CD8-positive, alpha-beta T cell (primary cell): ENCODE measurements at regions of chr6 and their contacts with region 1.

Region 1: DNA sequence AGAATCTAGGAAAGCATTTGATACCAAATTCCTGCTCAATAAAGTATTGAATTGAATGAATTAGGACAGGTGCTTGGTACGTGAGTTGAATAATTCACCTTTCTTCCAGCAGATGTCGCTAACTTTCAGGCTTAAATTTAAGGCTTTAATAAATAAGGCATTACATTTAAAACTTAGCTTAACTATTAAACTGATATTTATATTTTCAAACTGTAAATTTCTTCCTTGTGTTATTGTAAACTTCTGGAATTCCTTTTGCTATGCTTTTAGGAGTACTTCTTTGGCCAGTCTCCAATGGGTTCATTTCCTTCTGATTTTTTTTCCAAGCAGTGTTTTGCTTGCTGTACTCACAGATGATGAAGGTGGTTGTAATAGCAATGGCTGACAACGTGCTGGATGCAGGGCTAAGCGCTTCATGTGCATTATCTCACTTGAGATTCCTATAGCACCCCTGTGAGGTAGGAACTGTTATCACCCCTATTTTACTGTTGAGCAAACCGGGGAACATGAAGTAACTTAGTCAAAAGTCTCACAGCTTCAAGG is 71.3 kb upstream of the SLC2A12 start:
- DNase-seq: peak in 5 of 9 experiments; percentile 2 to 69 (median 47)
- ATAC-seq: peak; percentile 99
- H3K4me3 ChIP-seq: no peak overlapping the region
- H3K4me3 Mint-ChIP-seq: no peak overlapping the region
- H3K27ac ChIP-seq: no peak overlapping the region
- H3K27ac Mint-ChIP-seq: no peak overlapping the region
- H3K4me1 ChIP-seq: no peaks in the 10 kb centered on the region
- H3K4me1 Mint-ChIP-seq: peaks cover 4% of the 10 kb centered on the region
- H3K27me3 ChIP-seq: no peaks in the 10 kb centered on the region
- H3K27me3 Mint-ChIP-seq: no peaks in the 10 kb centered on the region
- CTCF ChIP-seq: peak; percentile 92

Region 2: GRCh38 chr6:133977983-133978895 is 145.5 kb before region 1 on chr6:
- CTCF ChIA-PET with region 1: no interaction called
- POLR2A ChIA-PET with region 1: no interaction called
- intact Hi-C with region 1: no loop called
- DNase-seq: no peak
- ATAC-seq: no peak
- H3K4me3 ChIP-seq: no peak overlapping the region
- H3K4me3 Mint-ChIP-seq: no peak overlapping the region
- H3K27ac ChIP-seq: no peak overlapping the region
- H3K27ac Mint-ChIP-seq: no peak overlapping the region
- H3K4me1 ChIP-seq: peaks cover 5% of the 10 kb centered on the region
- H3K4me1 Mint-ChIP-seq: peaks cover 47% of the 10 kb centered on the region
- H3K27me3 ChIP-seq: no peaks in the 10 kb centered on the region
- H3K27me3 Mint-ChIP-seq: no peaks in the 10 kb centered on the region
- CTCF ChIP-seq: no peak

Region 3: DNA sequence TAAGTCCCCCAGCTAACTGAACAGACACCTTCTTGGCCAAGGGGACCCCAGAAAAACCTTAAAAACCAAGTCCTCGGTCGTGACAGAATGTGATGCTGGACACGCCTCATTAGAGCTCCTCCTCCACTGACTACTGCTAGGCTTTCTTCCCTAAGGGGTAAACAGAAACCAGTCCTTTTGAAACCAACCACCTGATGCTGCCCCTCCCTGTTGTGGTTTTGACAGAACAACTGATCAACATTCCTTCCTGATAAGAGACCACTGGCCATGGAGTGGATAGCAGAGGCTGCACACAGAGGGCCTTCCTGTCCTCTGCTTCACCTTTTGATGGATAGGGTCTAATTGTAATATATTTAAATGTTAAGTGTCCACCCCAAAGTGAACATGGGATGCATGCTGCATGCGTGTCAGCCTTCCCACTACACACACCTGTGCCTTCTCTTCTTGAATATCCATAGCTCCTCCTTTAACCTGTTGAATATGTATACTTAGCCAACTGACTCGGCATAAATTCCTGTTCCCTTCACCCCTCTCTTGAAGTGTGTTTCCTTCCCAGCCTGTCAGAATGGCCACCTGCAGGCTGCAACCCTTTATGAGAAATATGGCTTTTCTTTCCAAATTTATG is 43.5 kb before region 1 on chr6:
- CTCF ChIA-PET with region 1: no interaction called
- POLR2A ChIA-PET with region 1: no interaction called
- intact Hi-C with region 1: no loop called
- DNase-seq: no peak
- ATAC-seq: no peak
- H3K4me3 ChIP-seq: no peak overlapping the region
- H3K4me3 Mint-ChIP-seq: no peak overlapping the region
- H3K27ac ChIP-seq: no peak overlapping the region
- H3K27ac Mint-ChIP-seq: no peak overlapping the region
- H3K4me1 ChIP-seq: no peaks in the 10 kb centered on the region
- H3K4me1 Mint-ChIP-seq: peaks cover 13% of the 10 kb centered on the region
- H3K27me3 ChIP-seq: no peaks in the 10 kb centered on the region
- H3K27me3 Mint-ChIP-seq: peaks cover 2% of the 10 kb centered on the region
- CTCF ChIP-seq: no peak

Region 4: DNA sequence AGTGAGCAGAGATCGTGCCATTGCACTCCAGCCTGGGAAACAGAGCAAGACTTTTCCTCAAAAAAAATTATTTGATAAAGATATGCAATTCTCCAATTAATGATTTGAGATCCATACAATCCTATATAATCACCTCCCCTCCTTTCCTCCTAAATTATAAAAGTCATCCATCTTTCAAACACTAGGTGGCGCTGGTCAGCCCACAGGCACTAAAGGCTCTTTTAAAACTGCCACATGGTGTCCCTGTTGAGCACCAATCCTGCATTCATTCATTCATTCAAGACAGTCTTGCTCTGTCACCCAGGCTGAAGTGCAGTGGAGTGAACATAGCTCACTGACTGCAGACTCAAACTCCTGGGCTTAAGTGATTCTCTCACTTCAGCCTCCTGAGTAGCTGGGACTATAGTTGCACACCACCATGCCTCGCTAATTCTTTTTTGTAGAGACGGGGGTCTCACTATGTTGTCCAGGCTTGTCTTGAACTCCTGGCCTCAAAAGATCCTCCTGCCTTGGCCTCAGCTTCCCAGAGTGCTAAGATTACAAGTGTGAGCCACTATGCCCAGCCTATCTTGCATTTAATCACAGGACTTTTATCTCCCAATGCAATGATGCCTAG is 12.6 kb before region 1 on chr6:
- CTCF ChIA-PET with region 1: interaction called, 41 read pairs
- POLR2A ChIA-PET with region 1: no interaction called
- intact Hi-C with region 1: no loop called
- DNase-seq: peak in 6 of 9 experiments; percentile 7 to 77 (median 44)
- ATAC-seq: peak; percentile 96
- H3K4me3 ChIP-seq: no peak overlapping the region
- H3K4me3 Mint-ChIP-seq: no peak overlapping the region
- H3K27ac ChIP-seq: no peak overlapping the region
- H3K27ac Mint-ChIP-seq: no peak overlapping the region
- H3K4me1 ChIP-seq: no peaks in the 10 kb centered on the region
- H3K4me1 Mint-ChIP-seq: peaks cover 3% of the 10 kb centered on the region
- H3K27me3 ChIP-seq: no peaks in the 10 kb centered on the region
- H3K27me3 Mint-ChIP-seq: peaks cover 14% of the 10 kb centered on the region
- CTCF ChIP-seq: peak; percentile 89

Region 5: DNA sequence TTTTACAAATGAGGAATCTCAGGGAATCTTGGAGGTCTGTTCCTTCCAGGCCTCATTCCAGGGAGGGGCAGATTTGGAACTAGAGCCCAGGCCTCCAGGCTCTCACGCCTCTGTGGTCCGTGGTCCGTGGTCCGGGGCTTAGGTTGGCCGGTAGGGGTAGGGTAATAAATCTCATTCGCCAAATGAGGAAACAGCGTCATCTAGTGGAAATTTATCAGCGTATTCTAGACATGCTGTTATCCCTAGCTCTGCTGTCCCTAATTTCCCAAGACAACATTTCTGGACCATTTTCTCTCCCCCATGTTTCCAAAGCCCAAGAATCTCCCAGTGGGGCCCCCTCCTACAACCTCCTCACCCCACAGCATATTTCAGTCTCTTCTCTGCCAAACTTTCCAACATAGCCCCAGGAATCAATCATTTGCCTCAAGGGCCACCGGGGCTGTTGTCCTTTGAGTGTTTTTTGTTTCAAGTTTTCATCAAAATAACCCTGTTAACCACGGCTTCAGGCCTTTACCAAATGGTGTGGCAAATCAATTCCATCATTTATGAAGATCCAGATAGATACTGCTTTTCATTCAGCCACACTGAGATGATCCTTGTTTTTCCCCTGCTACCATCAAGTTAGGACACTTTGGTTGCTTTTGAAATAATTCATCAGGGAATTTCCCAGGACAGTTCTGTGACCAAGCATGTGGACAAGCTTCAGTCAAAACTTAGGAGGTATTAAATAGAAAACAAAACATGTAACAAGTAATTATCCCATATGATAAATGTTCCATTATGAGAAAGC is 699.4 kb after region 1 on chr6:
- CTCF ChIA-PET with region 1: interaction called, 19 read pairs
- POLR2A ChIA-PET with region 1: no interaction called
- intact Hi-C with region 1: loop called in 1 of 2 experiments (anchors 1 kb)
- DNase-seq: peak in 4 of 9 experiments; percentile 22 to 74 (median 58)
- ATAC-seq: peak; percentile 61
- H3K4me3 ChIP-seq: no peak overlapping the region
- H3K4me3 Mint-ChIP-seq: no peak overlapping the region
- H3K27ac ChIP-seq: no peak overlapping the region
- H3K27ac Mint-ChIP-seq: no peak overlapping the region
- H3K4me1 ChIP-seq: no peaks in the 10 kb centered on the region
- H3K4me1 Mint-ChIP-seq: peaks cover 4% of the 10 kb centered on the region
- H3K27me3 ChIP-seq: no peaks in the 10 kb centered on the region
- H3K27me3 Mint-ChIP-seq: peaks cover 6% of the 10 kb centered on the region
- CTCF ChIP-seq: peak; percentile 76

Region 6: DNA sequence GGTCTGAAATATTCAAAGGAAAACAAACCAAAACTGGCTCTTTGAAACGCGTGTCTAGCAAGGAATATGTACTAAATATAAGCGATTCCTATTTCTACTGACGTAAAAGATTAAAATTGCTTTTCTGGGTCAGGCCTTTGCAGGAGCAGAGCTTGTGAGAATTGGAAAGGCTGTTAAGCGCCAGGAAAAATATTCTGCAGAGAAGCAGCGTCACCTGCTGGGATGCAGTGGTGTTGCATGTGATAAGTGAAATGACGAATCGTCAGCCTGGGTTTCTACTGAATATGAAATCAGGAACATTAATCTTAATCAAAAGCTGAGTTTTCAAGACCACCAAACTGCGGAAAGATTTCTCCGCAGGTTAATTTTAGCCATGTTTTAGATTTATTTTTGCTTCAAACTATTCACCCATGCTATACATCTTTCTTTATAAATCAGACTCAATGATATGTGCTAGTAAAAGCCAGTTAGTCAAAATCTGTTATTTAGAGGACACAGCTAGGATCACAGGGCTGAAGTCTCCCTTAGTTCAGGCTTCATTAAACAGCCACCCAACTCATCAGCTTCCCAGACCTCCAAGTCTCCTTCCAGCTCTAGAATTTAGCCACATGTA is 758.8 kb after region 1 on chr6:
- CTCF ChIA-PET with region 1: interaction called, 12 read pairs
- POLR2A ChIA-PET with region 1: no interaction called
- intact Hi-C with region 1: no loop called
- DNase-seq: peak; percentile 5 to 70 (median 32)
- ATAC-seq: peak; percentile 48
- H3K4me3 ChIP-seq: no peak overlapping the region
- H3K4me3 Mint-ChIP-seq: no peak overlapping the region
- H3K27ac ChIP-seq: no peak overlapping the region
- H3K27ac Mint-ChIP-seq: no peak overlapping the region
- H3K4me1 ChIP-seq: no peaks in the 10 kb centered on the region
- H3K4me1 Mint-ChIP-seq: no peaks in the 10 kb centered on the region
- H3K27me3 ChIP-seq: no peaks in the 10 kb centered on the region
- H3K27me3 Mint-ChIP-seq: peaks cover 8% of the 10 kb centered on the region
- CTCF ChIP-seq: peak; percentile 70